Heart right ventricle (tissue), 16 donors: ENCODE measurements at regions of chrX and their contacts with region 1.

Region 1: GRCh38 chrX:71181910-71182799 is 37.5 kb downstream of the NLGN3 start:
- DNase-seq: peak; percentile 73 to 92
- ATAC-seq: peak; percentile 89 to 98 (median 96)
- H3K4me3 ChIP-seq: peak overlapping the region in 9 of 10 donors; percentile 17 to 61 (median 49)
- H3K27ac ChIP-seq: peak overlapping the region; percentile 63 to 93 (median 84)
- H3K4me1 ChIP-seq: peaks cover 0 to 6% (median 0%) of the 10 kb centered on the region in 9 donors
- H3K27me3 ChIP-seq: peaks cover 0 to 8% (median 0%) of the 10 kb centered on the region in 7 donors
- CTCF ChIP-seq: no peak

Region 2: GRCh38 chrX:70769659-70770232 is 412.4 kb before region 1 on chrX:
- intact Hi-C with region 1: loop called in 6 of 10 experiments (anchors 2 to 10 kb)
- DNase-seq: no peak
- ATAC-seq: no peak
- H3K4me3 ChIP-seq: no peak overlapping the region
- H3K27ac ChIP-seq: no peak overlapping the region
- H3K4me1 ChIP-seq: no peaks in the 10 kb centered on the region
- H3K27me3 ChIP-seq: peaks cover 0 to 18% (median 0%) of the 10 kb centered on the region in 7 donors
- CTCF ChIP-seq: peak in 7 of 9 donors; percentile 35 to 60 (median 47)

Region 3: DNA sequence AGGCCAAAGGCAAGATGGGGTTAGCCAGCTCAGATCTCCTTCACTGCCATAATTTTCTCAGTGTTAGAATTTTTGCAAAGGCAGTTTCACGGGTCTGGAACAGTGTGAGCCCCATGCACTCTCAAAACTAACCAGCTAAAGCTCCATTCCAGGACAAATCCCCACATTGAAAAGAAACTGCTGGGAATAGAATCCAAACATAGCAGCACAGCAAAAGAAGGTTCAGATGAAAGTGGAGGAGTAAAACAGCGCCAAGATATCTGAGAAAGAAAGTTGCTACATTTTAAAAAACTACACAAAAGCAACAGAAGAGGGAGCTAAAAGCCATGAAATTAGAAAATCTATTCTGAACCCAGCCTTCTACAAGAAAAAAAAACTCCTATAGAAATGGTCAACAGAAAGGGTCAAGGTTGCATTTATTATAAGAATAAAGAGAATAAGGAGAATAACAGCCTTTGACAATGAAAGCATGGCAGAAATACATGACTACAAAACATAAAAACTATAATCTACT is 211.6 kb before region 1 on chrX:
- intact Hi-C with region 1: loop called in 7 of 10 experiments (anchors 2 to 10 kb)
- DNase-seq: no peak
- ATAC-seq: no peak
- H3K4me3 ChIP-seq: no peak overlapping the region
- H3K27ac ChIP-seq: no peak overlapping the region
- H3K4me1 ChIP-seq: no peaks in the 10 kb centered on the region
- H3K27me3 ChIP-seq: peaks cover 0 to 3% (median 0%) of the 10 kb centered on the region in 7 donors
- CTCF ChIP-seq: peak in 7 of 9 donors; percentile 6 to 48 (median 32)

Region 4: GRCh38 chrX:71057848-71058530 is 124.2 kb before region 1 on chrX:
- intact Hi-C with region 1: no loop called
- DNase-seq: no peak
- ATAC-seq: no peak
- H3K4me3 ChIP-seq: no peak overlapping the region
- H3K27ac ChIP-seq: no peak overlapping the region
- H3K4me1 ChIP-seq: peaks cover 0 to 29% (median 0%) of the 10 kb centered on the region in 9 donors
- H3K27me3 ChIP-seq: peaks cover 0 to 20% (median 0%) of the 10 kb centered on the region in 7 donors
- CTCF ChIP-seq: no peak

Region 5: GRCh38 chrX:71068049-71068763 is 113.9 kb before region 1 on chrX and contains the start of gene SNX12:
- intact Hi-C with region 1: loop called in 1 of 10 experiments (anchors 5 kb)
- DNase-seq: peak; percentile 86 to 91
- ATAC-seq: peak; percentile 96 to 100 (median 98)
- H3K4me3 ChIP-seq: peak within 1 kb of the TSS; percentile 44 to 70 (median 65)
- H3K27ac ChIP-seq: peak within 1 kb of the TSS; percentile 35 to 88 (median 81)
- H3K4me1 ChIP-seq: peaks cover 0 to 12% (median 5%) of the 10 kb centered on the region in 9 donors
- H3K27me3 ChIP-seq: peaks cover 0 to 12% (median 0%) of the 10 kb centered on the region in 7 donors
- CTCF ChIP-seq: no peak
- total RNA-seq, gene SNX12: 41.5 to 54.0 (median 49.4) TPM

Region 6: DNA sequence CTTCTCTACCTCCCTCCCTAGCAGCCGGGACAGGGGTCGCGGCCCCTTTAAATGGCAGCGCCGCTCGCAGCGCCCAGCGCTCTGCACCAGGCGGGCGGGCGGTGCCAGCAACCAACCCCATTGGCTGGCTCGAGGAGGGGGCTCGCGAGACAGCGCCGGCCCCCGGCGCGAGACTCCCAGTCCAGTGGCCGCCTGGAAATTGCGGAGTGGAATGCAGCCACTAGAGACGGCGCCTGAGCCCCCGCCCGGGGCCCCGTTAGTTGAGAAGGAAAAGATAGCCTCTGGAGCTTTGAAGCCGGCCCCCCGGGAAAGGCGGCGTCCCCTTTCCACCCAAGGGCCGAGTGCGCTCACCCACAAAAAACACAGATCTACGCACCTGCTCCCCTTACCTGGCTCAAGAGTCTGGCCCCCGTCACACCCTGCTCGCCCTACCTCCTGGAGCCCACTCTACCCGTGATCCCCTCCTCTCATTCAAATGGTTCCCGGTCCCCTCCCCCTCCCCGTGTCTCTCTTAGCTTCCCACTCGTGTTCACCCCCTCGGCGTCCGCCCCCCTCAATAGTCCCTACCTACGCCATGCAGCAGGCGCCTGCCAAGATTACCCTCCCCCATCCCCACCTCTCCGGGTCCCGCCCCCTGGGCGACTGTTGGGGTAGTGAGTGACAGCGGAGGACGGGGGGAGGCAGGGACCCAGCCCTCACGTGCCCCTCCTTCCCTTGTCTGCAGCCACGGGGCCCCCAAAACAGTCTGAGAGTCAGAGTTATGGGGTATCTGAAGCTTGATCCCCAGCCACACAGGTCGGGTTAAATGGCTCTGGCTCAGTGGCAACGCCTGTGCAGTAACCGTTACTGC is 72.2 kb after region 1 on chrX and contains the start of gene ZMYM3:
- intact Hi-C with region 1: loop called in 1 of 10 experiments (anchors 5 kb)
- DNase-seq: peak; percentile 84 to 87
- ATAC-seq: peak; percentile 94 to 98 (median 97)
- H3K4me3 ChIP-seq: peak within 1 kb of the TSS; percentile 40 to 83 (median 72)
- H3K27ac ChIP-seq: peak within 1 kb of the TSS; percentile 79 to 92 (median 87)
- H3K4me1 ChIP-seq: peaks cover 0 to 14% (median 6%) of the 10 kb centered on the region in 9 donors
- H3K27me3 ChIP-seq: peaks cover 0 to 11% (median 0%) of the 10 kb centered on the region in 7 donors
- CTCF ChIP-seq: no peak
- total RNA-seq, gene ZMYM3: 10.3 to 18.7 (median 16.5) TPM